Activated CD8-positive, alpha-beta T cell treated with anti-CD3 and anti-CD28 coated beads for 36 hours (primary cell): ENCODE measurements at regions of chr14 and their contacts with region 1.

Region 1: GRCh38 chr14:31127690-31128089 is 79.9 kb downstream of the HECTD1 start:
- DNase-seq: peak; percentile 40
- ATAC-seq: peak; percentile 93
- H3K4me3 Mint-ChIP-seq: no peak overlapping the region
- H3K27ac Mint-ChIP-seq: no peak overlapping the region
- H3K4me1 Mint-ChIP-seq: peaks cover 30% of the 10 kb centered on the region
- H3K27me3 Mint-ChIP-seq: no peaks in the 10 kb centered on the region
- CTCF ChIP-seq: no peak

Region 2: GRCh38 chr14:31357279-31357678 is 229.6 kb after region 1 on chr14:
- CTCF ChIA-PET with region 1: no interaction called
- POLR2A ChIA-PET with region 1: no interaction called
- intact Hi-C with region 1: loop called (anchors 10 kb)
- DNase-seq: no peak
- ATAC-seq: no peak
- H3K4me3 Mint-ChIP-seq: no peak overlapping the region
- H3K27ac Mint-ChIP-seq: no peak overlapping the region
- H3K4me1 Mint-ChIP-seq: peaks cover 3% of the 10 kb centered on the region
- H3K27me3 Mint-ChIP-seq: no peaks in the 10 kb centered on the region
- CTCF ChIP-seq: no peak